PC-9 (cell line): ENCODE measurements at regions of chr2 and their contacts with region 1.

Region 1: DNA sequence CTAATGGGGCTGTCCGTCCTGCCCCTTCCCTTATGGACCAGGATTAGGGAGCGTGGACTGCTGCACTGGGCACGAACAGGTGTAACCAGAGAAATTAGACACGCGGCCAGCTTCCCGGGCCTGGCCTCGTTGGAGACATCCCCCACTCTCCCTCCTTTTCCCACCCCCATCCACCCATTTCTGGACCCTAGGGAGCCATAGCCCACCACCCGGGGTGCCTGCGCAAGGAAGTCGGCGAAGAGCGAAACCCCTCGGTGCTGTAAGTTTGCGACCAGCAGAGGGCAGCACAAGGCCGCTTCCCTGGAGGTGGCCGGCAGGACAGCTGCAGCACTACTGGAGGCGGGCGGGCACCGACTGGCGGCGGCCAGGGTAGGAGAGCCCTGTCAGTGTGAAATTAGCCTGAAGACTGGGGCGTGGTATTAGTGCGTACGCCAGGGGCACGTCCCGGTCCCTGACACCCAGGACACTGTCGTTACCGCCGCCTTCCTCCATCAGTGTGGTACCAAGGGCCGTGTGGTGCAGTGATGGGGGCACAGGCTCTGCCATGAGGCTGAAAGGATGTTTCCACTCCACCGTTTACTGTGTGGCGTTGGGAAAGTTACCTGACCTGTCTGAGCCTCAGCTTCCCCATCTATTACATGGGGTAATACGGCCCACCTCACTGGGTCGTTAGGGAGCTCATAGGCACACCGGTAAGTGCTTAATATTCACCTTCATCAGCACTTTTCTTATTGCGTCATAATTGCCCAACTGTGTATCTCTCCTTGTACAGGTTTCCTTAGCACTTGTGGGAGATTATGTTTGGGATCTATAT is 36.0 kb upstream of the CD207 start:
- DNase-seq: peak; percentile 61 to 84
- H3K4me3 ChIP-seq: no peak overlapping the region
- H3K27ac ChIP-seq: no peak overlapping the region
- H3K4me1 ChIP-seq: no peaks in the 10 kb centered on the region
- H3K27me3 ChIP-seq: peaks cover 41% of the 10 kb centered on the region
- CTCF ChIP-seq: peak; percentile 91

Region 2: DNA sequence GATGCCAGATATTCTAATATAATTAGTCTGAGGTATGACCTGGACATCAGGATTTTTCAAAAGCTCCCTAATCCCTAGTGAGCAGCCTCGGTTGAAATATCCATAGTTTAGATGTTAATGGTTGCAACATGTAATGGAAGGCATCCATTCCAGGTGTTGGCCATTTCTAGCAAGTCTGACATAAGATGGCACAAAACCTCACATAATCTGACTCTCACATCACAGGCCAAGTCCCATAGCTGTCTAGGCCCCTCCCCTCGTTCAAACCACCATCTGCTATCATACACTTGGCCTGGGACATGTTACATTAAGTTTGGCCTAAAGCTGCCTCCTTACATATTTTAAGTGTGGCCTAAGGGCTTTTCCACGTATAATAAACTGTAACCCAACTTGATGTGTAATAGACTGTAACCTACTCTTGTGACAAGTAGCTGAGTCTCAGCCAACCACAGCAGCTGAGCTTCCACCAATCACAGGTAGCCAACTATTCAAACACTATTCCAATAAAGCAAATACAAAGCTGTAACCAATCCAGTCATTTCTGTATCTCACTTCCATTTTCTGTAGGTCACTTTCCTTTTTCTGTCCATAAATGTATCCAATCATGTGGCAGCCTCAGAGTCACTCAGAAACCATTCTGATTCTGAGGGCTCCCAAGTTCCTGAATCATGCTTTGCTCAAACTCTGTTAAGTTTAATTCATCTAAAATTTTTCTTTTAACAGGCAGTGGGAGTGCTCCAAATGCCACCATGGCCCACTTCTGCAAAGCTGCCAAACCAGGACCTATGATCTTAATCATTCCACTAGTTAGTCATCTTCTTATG is 163.0 kb before region 1 on chr2:
- CTCF ChIA-PET with region 1: no interaction called
- POLR2A ChIA-PET with region 1: no interaction called
- intact Hi-C with region 1: no loop called
- DNase-seq: no peak
- H3K4me3 ChIP-seq: no peak overlapping the region
- H3K27ac ChIP-seq: no peak overlapping the region
- H3K4me1 ChIP-seq: no peaks in the 10 kb centered on the region
- H3K27me3 ChIP-seq: peaks cover 9% of the 10 kb centered on the region; the same call in 1 of the 2 replicates
- CTCF ChIP-seq: no peak

Region 3: DNA sequence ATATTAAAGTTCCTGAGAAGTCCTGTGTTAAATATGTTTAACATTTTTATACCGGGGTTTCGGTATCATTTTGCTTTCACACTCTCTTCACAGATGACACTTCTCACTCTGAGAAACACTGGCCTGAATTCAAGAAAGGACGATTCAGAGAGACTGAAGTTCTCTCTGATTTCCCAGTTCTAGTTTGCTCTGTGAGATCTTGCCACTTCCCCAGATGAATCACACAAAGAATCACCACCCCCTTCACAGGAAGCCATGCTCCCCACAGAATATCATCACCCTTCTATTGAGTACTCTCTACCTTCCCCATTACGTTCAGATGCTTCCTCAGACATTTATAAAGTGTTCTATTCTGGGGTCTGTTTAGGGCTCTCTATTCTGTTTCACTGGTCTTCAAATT is 19.9 kb before region 1 on chr2:
- CTCF ChIA-PET with region 1: no interaction called
- POLR2A ChIA-PET with region 1: no interaction called
- intact Hi-C with region 1: no loop called
- DNase-seq: no peak
- H3K4me3 ChIP-seq: no peak overlapping the region
- H3K27ac ChIP-seq: no peak overlapping the region
- H3K4me1 ChIP-seq: no peaks in the 10 kb centered on the region
- H3K27me3 ChIP-seq: peaks cover 55% of the 10 kb centered on the region
- CTCF ChIP-seq: no peak

Region 4: DNA sequence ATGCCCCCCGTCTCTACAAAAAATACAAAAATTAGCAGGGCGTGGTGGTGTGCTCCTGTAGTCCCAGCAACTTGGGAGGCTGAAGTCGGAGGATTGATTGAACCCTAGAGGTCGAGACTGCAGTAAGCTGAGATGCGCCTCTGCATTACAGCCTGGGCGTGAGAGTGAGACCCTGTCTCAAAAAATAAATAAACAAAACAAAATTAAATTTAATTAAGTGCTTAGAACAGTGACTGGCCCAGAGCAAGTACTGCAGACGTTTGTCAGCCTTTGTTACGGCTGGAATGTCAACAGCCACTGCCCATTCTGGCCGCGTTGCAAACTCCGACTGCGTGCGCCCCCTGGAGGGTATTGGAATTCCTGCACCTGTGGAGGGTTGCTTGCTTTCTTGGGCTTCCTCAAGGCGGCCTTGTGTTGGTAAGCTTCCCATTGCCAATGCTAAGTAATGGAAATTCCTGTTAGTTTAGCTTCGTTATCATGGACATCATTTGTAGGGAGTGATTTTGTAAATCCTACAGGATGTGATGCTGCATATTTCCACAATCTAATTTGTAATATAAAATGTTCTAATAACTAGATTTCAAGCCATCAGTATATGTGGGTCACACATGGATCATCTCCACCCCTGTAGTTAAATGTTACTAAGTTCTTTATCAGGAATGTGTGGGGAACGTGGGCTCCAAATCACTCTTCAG is 48.2 kb after region 1 on chr2:
- CTCF ChIA-PET with region 1: interaction called, 3 read pairs
- POLR2A ChIA-PET with region 1: no interaction called
- intact Hi-C with region 1: loop called (anchors 2 kb)
- DNase-seq: peak; percentile 65 to 82
- H3K4me3 ChIP-seq: no peak overlapping the region
- H3K27ac ChIP-seq: no peak overlapping the region
- H3K4me1 ChIP-seq: no peaks in the 10 kb centered on the region
- H3K27me3 ChIP-seq: no peaks in the 10 kb centered on the region
- CTCF ChIP-seq: peak; percentile 95

Region 5: GRCh38 chr2:71256421-71256820 is 384.8 kb after region 1 on chr2:
- CTCF ChIA-PET with region 1: no interaction called
- POLR2A ChIA-PET with region 1: no interaction called
- intact Hi-C with region 1: no loop called
- DNase-seq: no peak
- H3K4me3 ChIP-seq: no peak overlapping the region
- H3K27ac ChIP-seq: no peak overlapping the region
- H3K4me1 ChIP-seq: no peaks in the 10 kb centered on the region
- H3K27me3 ChIP-seq: peaks cover 24% of the 10 kb centered on the region; the same call in 1 of the 2 replicates
- CTCF ChIP-seq: no peak